Activated CD4-positive, alpha-beta memory T cell treated with anti-CD3 and anti-CD28 coated beads for 36 hours (primary cell): ENCODE measurements at regions of chr4 and their contacts with region 1.

Region 1: DNA sequence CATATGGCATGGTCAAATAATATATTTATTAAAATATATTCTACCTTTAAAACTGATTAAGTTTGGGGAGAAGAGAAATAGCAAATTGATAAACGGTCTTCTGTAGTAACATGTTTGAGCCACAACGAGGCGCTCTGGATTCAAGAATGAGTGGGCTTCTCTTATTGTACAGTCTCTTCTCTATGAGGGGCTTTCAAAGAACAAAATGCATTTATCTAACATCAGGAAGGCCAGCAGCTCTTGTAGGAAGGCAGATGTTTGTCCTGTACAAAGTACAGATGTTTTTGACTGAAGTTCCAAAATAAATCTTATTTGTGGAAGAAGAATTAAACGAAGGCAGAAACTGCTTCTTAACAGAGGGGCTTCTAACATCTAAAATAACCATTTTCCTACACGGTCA is 153.6 kb downstream of the RASL11B start:
- DNase-seq: peak; percentile 21
- H3K4me3 Mint-ChIP-seq: no peak overlapping the region
- H3K27ac Mint-ChIP-seq: no peak overlapping the region
- H3K4me1 Mint-ChIP-seq: peaks cover 22% of the 10 kb centered on the region
- H3K27me3 Mint-ChIP-seq: no peaks in the 10 kb centered on the region

Region 2: GRCh38 chr4:53068755-53069330 is 53.2 kb after region 1 on chr4:
- CTCF ChIA-PET with region 1: no interaction called
- POLR2A ChIA-PET with region 1: no interaction called
- intact Hi-C with region 1: no loop called
- DNase-seq: no peak
- H3K4me3 Mint-ChIP-seq: no peak overlapping the region
- H3K27ac Mint-ChIP-seq: no peak overlapping the region
- H3K4me1 Mint-ChIP-seq: no peaks in the 10 kb centered on the region
- H3K27me3 Mint-ChIP-seq: no peaks in the 10 kb centered on the region

Region 3: GRCh38 chr4:54228056-54228527 is 1212.4 kb after region 1 on chr4:
- CTCF ChIA-PET with region 1: interaction called, 13 read pairs
- POLR2A ChIA-PET with region 1: no interaction called
- intact Hi-C with region 1: loop called (anchors 2 kb)
- DNase-seq: peak; percentile 73
- H3K4me3 Mint-ChIP-seq: peak overlapping the region; percentile 12
- H3K27ac Mint-ChIP-seq: no peak overlapping the region
- H3K4me1 Mint-ChIP-seq: peaks cover 46% of the 10 kb centered on the region
- H3K27me3 Mint-ChIP-seq: peaks cover 85% of the 10 kb centered on the region